OCI-LY7 (cell line): ENCODE measurements at regions of chr1 and their contacts with region 1.

Region 1: GRCh38 chr1:66282343-66282852 is 251.6 kb upstream of the SGIP1 start:
- DNase-seq: peak; percentile 85
- H3K4me3 ChIP-seq: peak overlapping the region; percentile 32
- H3K27ac ChIP-seq: peak overlapping the region; percentile 59
- H3K4me1 ChIP-seq: peaks cover 73% of the 10 kb centered on the region
- CTCF ChIP-seq: peak; percentile 62

Region 2: DNA sequence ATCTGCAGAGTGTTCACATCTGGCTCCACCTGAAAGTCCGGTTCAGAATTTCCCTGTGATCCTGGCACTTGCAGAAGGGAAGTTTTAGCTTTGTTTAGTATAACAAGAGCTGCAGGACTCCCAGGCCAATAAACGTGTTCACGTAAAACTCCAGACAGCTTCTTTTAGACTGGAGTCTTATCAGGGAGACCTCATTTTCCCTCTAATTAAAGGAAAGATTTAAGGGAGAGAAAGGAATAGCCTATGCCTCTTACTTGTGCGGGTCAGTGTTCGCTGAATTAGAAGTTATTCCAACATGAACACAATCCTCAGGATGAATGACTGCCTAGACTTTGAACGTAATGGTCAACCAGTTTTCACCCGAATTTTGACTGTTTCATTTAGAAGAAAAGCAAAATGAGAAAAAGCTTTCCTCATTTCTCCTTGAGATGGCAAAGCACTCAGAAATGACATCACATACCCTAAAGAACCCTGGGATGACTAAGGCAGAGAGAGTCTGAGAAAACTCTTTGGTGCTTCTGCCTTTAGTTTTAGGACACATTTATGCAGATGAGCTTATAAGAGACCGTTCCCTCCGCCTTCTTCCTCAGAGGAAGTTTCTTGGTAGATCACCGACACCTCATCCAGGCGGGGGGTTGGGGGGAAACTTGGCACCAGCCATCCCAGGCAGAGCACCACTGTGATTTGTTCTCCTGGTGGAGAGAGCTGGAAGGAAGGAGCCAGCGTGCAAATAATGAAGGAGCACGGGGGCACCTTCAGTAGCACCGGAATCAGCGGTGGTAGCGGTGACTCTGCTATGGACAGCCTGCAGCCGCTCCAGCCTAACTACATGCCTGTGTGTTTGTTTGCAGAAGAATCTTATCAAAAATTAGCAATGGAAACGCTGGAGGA is 49.5 kb after region 1 on chr1:
- CTCF ChIA-PET with region 1: no interaction called
- POLR2A ChIA-PET with region 1: interaction called, 27 read pairs
- intact Hi-C with region 1: loop called (anchors 2 kb)
- DNase-seq: peak; percentile 61
- H3K4me3 ChIP-seq: peak overlapping the region; percentile 77
- H3K27ac ChIP-seq: peak overlapping the region; percentile 93
- H3K4me1 ChIP-seq: peaks cover 71% of the 10 kb centered on the region
- CTCF ChIP-seq: no peak

Region 3: DNA sequence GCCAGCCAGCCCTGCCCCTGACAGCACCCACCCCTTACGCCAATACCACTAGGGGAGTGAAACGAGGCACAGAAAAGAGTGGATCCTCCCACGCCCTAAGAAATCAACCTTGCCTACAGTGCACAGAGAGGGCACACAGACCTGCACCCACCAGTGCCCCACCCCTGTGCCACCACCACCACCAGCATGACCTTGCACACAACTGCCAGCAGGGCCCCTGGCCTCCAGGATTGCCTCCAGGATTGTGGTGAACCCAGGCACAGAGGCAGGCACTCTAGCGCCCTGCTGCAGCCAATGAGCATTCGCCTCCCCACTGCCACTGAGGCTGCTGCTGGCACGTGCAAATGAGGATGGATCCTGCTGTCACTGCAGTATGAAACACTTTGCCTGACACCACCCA is 228.0 kb after region 1 on chr1:
- CTCF ChIA-PET with region 1: no interaction called
- POLR2A ChIA-PET with region 1: no interaction called
- intact Hi-C with region 1: no loop called
- DNase-seq: no peak
- H3K4me3 ChIP-seq: no peak overlapping the region
- H3K27ac ChIP-seq: no peak overlapping the region
- H3K4me1 ChIP-seq: no peaks in the 10 kb centered on the region
- CTCF ChIP-seq: no peak